GM13977 (cell line): ENCODE measurements at regions of chr11 and their contacts with region 1.

Region 1: GRCh38 chr11:126440792-126441514 is 85.5 kb downstream of the ST3GAL4 start:
- DNase-seq: peak; percentile 92
- CTCF ChIP-seq: peak; percentile 97

Region 2: GRCh38 chr11:126007238-126007637 is 433.7 kb before region 1 on chr11:
- in situ Hi-C with region 1: no loop called
- DNase-seq: no peak
- CTCF ChIP-seq: no peak

Region 3: DNA sequence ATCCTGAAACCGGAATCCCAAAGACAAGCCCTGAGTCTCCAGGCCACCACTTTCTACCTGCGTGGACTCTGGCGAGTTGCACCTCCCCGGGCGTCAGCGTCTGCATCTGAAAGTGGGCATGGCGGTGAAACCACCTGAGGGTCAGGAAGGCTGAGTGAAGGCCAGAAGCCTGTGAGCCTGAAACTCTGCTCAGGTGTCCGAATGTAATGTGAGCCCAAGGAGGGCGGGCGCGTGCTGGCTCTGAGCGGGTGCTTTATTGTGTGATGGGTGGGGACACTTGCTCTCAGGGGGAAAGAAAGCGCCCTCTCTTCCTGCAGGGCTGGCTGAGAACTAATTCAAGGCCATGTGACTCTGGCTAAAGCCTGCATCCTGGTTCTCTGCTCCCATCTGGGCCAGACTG is 50.1 kb after region 1 on chr11:
- in situ Hi-C with region 1: no loop called
- DNase-seq: no peak
- CTCF ChIP-seq: no peak

Region 4: GRCh38 chr11:127345819-127346459 is 905.0 kb after region 1 on chr11:
- in situ Hi-C with region 1: loop called (anchors 25 kb)
- DNase-seq: peak; percentile 48
- CTCF ChIP-seq: peak; percentile 76